ENCODE measurements at regions of chr12 and their contacts with region 1.

Region 1: DNA sequence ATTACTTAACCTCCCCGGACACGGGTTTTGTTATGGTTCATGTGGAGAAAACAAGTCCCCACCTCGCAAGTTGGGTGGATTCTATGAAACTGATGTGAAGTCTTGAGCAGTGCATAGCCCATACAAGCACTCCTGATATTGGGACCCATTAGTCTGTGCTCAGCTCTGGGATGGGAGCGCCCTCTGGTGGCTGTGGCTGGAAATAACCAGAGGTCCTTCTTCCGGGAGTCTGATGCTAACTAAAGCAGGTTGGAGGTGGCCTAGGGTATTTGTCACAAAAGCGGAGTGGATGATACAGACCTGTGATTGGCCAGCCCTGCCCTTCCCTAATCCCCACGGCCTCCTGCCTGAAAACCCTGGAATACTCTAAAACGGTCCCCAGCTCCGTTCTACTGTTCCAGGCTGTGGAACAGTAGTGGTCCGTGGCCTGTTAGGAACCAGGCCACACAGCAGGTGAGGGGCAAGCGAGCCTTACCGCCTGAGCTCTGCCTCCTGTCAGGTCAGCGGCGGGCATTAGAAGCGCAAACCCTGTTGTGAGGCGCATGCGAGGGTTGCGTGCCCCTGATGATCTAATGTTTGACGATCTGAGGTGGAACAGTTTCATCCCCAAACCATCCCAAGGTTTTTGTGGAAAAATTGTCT is 6.4 kb downstream of the SLC48A1 start:
- DNase-seq: peak; percentile 70
- H3K4me3 ChIP-seq: no peak overlapping the region
- H3K27ac ChIP-seq: no peak overlapping the region
- H3K4me1 ChIP-seq: peaks cover 59% of the 10 kb centered on the region
- H3K27me3 ChIP-seq: no peaks in the 10 kb centered on the region
- CTCF ChIP-seq: peak; percentile 88 to 97

Region 2: GRCh38 chr12:47715393-47715876 is 64.0 kb before region 1 on chr12:
- CTCF ChIA-PET with region 1: no interaction called
- dilution Hi-C with region 1: loop called (anchors 5 kb)
- in situ Hi-C with region 1: no loop called
- intact Hi-C with region 1: loop called (anchors 1 kb)
- DNase-seq: peak; percentile 77
- H3K4me3 ChIP-seq: peak overlapping the region in 1 of 3 experiments; percentile 9
- H3K27ac ChIP-seq: no peak overlapping the region
- H3K4me1 ChIP-seq: peaks cover 7% of the 10 kb centered on the region
- H3K27me3 ChIP-seq: no peaks in the 10 kb centered on the region
- CTCF ChIP-seq: peak; percentile 79 to 80

Region 3: GRCh38 chr12:47742253-47742825 is 37.1 kb before region 1 on chr12:
- CTCF ChIA-PET with region 1: interaction called, 4 read pairs
- dilution Hi-C with region 1: no loop called
- in situ Hi-C with region 1: loop called (anchors 5 kb)
- intact Hi-C with region 1: loop called (anchors 1 kb)
- DNase-seq: no peak
- H3K4me3 ChIP-seq: no peak overlapping the region
- H3K27ac ChIP-seq: no peak overlapping the region
- H3K4me1 ChIP-seq: peaks cover 21% of the 10 kb centered on the region
- H3K27me3 ChIP-seq: no peaks in the 10 kb centered on the region
- CTCF ChIP-seq: peak; percentile 98 to 99

Region 4: DNA sequence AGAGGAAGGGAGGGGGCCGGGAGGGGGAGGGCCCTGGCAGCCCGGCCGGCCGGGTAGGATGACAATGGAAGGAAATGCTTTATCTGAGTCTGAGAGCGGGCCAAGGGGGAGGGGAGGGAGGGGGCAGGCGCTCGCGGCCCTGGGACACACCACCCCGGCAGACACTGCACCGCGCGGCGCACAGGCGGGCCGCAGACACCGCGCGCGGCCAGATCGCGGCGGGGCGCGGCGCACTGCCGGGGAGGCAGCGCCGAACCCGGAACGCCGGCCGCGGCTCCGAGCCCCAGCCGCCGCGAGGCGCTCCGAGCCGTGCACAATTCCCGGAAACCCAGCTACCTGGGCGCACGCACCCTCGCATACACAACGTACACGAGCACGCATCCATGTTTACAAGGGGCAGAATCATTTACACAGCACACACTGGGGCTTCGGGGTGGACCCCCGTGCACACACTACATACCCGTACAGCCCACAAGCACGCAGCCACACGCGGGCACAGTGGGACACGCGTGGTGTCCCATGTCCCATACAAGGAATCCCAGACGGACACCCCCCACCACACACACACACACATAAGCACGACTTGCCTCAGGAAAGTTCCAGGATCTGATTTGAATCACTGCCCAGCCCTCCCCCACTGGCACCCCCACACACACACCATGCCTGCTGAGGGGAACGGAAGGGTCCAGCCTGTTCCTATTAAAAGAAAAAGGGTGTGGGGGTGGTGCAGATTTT is 40.6 kb after region 1 on chr12 and contains the start of gene HDAC7:
- CTCF ChIA-PET with region 1: no interaction called
- dilution Hi-C with region 1: loop called (anchors 5 kb)
- in situ Hi-C with region 1: no loop called
- intact Hi-C with region 1: loop called (anchors 5 kb)
- DNase-seq: peak; percentile 68
- H3K4me3 ChIP-seq: peak within 1 kb of the TSS; percentile 45 to 79 (median 71)
- H3K27ac ChIP-seq: peak within 1 kb of the TSS; percentile 78
- H3K4me1 ChIP-seq: peaks cover 48% of the 10 kb centered on the region
- H3K27me3 ChIP-seq: no peaks in the 10 kb centered on the region
- CTCF ChIP-seq: peak in 1 of 2 donors; percentile 14
- total RNA-seq, gene HDAC7: 17.7 to 72.1 TPM

Region 5: GRCh38 chr12:47844274-47845019 is 65.0 kb after region 1 on chr12:
- CTCF ChIA-PET with region 1: no interaction called
- dilution Hi-C with region 1: loop called (anchors 5 kb)
- in situ Hi-C with region 1: loop called in 1 of 2 experiments (anchors 5 kb)
- intact Hi-C with region 1: no loop called
- DNase-seq: no peak
- H3K4me3 ChIP-seq: no peak overlapping the region
- H3K27ac ChIP-seq: no peak overlapping the region
- H3K4me1 ChIP-seq: peaks cover 6% of the 10 kb centered on the region
- H3K27me3 ChIP-seq: no peaks in the 10 kb centered on the region
- CTCF ChIP-seq: no peak